ENCODE measurements at regions of chr12 and their contacts with region 1.

Region 1: DNA sequence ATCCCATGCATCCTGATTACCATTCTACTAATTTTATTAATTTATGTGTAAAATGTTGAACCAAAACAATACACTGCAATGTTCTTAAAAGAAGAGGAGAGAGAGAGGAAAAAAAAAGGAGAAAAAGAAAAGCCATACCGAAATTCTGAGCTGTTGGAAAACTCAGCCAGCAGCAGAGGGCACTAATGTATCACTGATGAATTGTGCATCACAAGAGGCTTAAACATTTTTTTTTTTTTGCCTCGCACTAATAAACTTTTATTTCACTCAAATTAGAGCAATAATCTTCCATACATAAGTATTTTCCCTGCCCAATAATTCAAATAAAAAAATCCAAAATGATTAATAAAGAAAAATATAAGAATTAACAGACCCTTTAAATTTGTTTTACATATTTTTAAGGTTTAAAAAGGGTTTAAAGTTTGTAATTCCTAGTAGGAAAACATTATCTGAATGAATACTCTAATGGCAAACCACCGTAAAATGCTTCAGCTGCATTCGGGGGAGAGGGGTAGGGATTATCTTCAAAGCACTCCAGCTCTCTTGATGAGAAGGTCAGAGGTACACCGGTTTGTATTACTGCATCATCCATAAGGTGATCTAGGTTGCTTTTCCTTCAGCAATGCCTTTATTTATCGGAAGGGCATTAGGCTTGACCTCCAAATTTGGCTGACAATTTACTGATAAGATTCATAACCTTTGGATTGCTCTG is 41.9 kb downstream of the ATP23 start:
- DNase-seq: peak in 3 of 9 donors; percentile 1 to 9 (median 6)
- ATAC-seq: no peak
- H3K4me3 ChIP-seq: no peak overlapping the region
- H3K4me3 Mint-ChIP-seq: no peak overlapping the region
- H3K27ac ChIP-seq: no peak overlapping the region
- H3K27ac Mint-ChIP-seq: no peak overlapping the region
- H3K4me1 ChIP-seq: no peaks in the 10 kb centered on the region
- H3K4me1 Mint-ChIP-seq: no peaks in the 10 kb centered on the region
- H3K27me3 ChIP-seq: no peaks in the 10 kb centered on the region
- H3K27me3 Mint-ChIP-seq: peaks cover 3 to 24% (median 13%) of the 10 kb centered on the region in 5 donors

Region 2: DNA sequence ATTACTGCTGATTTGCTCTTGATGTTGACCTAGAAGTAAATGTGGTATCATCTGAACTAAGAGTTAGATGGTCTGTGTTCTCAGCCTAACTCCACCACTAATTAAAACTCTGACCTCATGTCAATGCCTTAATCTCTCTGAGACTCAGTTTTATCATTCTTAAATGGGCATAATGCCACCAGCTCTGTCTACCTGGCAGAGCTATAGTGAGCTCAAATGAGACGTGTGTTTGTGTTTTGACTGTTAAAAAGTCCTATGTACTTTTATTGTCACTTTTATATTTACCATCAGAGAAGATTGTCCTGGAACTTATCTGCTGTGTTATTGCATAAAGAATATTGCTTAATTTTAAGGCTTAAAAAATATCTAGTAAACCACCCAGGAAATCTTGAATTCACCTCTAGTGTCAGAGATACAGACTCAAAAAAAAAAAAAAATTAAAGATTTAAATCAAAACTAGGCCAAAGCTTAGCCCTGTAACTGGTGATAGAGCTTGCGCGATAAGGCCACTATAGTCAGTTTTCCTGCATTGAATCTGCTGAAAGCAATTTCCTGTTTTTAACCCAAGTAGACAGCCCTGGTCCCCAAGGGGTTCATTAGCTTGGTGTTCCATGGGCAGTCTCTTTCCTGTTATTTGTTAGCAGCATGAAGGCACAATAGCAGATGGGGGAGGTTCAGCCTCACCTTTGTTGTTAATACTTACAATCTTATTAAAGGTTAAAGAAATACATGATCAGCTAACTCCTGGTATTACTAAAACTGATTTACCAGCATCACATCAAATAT is 219.8 kb after region 1 on chr12:
- CTCF ChIA-PET with region 1: no interaction called
- POLR2A ChIA-PET with region 1: no interaction called
- intact Hi-C with region 1: no loop called
- DNase-seq: no peak
- ATAC-seq: no peak
- H3K4me3 ChIP-seq: no peak overlapping the region
- H3K4me3 Mint-ChIP-seq: no peak overlapping the region
- H3K27ac ChIP-seq: no peak overlapping the region
- H3K27ac Mint-ChIP-seq: no peak overlapping the region
- H3K4me1 ChIP-seq: no peaks in the 10 kb centered on the region
- H3K4me1 Mint-ChIP-seq: no peaks in the 10 kb centered on the region
- H3K27me3 ChIP-seq: no peaks in the 10 kb centered on the region
- H3K27me3 Mint-ChIP-seq: peaks cover 0 to 30% (median 23%) of the 10 kb centered on the region in 5 donors

Region 3: DNA sequence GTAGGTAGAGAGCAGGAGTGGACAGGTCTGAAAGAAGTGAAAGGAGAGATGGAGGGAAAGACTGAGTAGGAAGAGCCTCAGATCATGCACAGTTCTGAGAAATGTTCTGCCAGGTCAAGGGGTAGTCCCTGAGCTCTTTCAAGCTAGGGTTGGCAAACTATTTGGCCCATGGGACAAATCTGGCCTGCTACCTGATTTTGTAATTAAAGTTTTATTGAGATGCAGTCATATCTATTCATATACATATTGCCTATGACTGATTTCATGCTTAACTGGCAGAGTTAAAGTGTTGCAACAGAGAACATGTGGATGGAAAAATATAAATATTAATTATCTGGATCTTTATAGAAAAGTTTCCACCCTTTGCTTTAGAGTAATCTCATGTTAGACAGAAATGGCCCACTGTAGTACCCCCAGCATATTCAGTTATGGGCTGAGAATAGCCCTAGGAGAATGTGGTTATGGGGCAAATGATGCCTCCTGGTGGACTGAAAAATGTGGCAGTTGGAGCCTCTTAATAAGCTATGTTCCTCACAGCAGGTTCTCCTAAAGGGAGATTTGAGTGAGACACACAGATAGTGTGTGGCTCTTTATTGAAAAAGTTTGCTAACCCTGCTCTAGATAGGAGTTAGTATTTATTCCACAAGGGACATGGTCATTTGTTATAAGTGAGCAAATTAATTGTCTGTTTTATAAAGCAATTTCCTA is 460.1 kb after region 1 on chr12:
- CTCF ChIA-PET with region 1: no interaction called
- POLR2A ChIA-PET with region 1: no interaction called
- intact Hi-C with region 1: loop called in 1 of 2 experiments (anchors 5 kb)
- DNase-seq: no peak
- ATAC-seq: no peak
- H3K4me3 ChIP-seq: no peak overlapping the region
- H3K4me3 Mint-ChIP-seq: no peak overlapping the region
- H3K27ac ChIP-seq: no peak overlapping the region
- H3K27ac Mint-ChIP-seq: no peak overlapping the region
- H3K4me1 ChIP-seq: no peaks in the 10 kb centered on the region
- H3K4me1 Mint-ChIP-seq: no peaks in the 10 kb centered on the region
- H3K27me3 ChIP-seq: no peaks in the 10 kb centered on the region
- H3K27me3 Mint-ChIP-seq: peaks cover 0 to 21% (median 5%) of the 10 kb centered on the region in 5 donors

Region 4: GRCh38 chr12:59149997-59150642 is 1166.8 kb after region 1 on chr12:
- CTCF ChIA-PET with region 1: no interaction called
- POLR2A ChIA-PET with region 1: no interaction called
- intact Hi-C with region 1: loop called in 1 of 2 experiments (anchors 5 kb)
- DNase-seq: peak in 2 of 9 donors; percentile 3 to 20
- ATAC-seq: peak; percentile 74
- H3K4me3 ChIP-seq: no peak overlapping the region
- H3K4me3 Mint-ChIP-seq: no peak overlapping the region
- H3K27ac ChIP-seq: no peak overlapping the region
- H3K27ac Mint-ChIP-seq: no peak overlapping the region
- H3K4me1 ChIP-seq: no peaks in the 10 kb centered on the region
- H3K4me1 Mint-ChIP-seq: peaks cover 0 to 4% (median 0%) of the 10 kb centered on the region in 7 donors
- H3K27me3 ChIP-seq: no peaks in the 10 kb centered on the region
- H3K27me3 Mint-ChIP-seq: no peaks in the 10 kb centered on the region

Region 5: GRCh38 chr12:59164991-59165718 is 1181.9 kb after region 1 on chr12:
- CTCF ChIA-PET with region 1: no interaction called
- POLR2A ChIA-PET with region 1: no interaction called
- intact Hi-C with region 1: loop called in 1 of 2 experiments (anchors 10 kb)
- DNase-seq: no peak
- ATAC-seq: no peak
- H3K4me3 ChIP-seq: no peak overlapping the region
- H3K4me3 Mint-ChIP-seq: no peak overlapping the region
- H3K27ac ChIP-seq: no peak overlapping the region
- H3K27ac Mint-ChIP-seq: no peak overlapping the region
- H3K4me1 ChIP-seq: no peaks in the 10 kb centered on the region
- H3K4me1 Mint-ChIP-seq: peaks cover 0 to 2% (median 0%) of the 10 kb centered on the region in 7 donors
- H3K27me3 ChIP-seq: no peaks in the 10 kb centered on the region
- H3K27me3 Mint-ChIP-seq: peaks cover 0 to 3% (median 3%) of the 10 kb centered on the region in 5 donors

Measured in naive thymus-derived CD4-positive, alpha-beta T cell (primary cell).